Testis (tissue), 5 donors: ENCODE measurements at regions of chr14 and their contacts with region 1.

Region 1: GRCh38 chr14:61321385-61322010 is at the start of gene PRKCH:
- DNase-seq: peak; percentile 74
- H3K4me3 ChIP-seq: peak within 1 kb of the TSS; percentile 65
- H3K27ac ChIP-seq: peak within 1 kb of the TSS; percentile 13 to 75
- H3K4me1 ChIP-seq: peaks cover 4% of the 10 kb centered on the region
- H3K27me3 ChIP-seq: no peaks in the 10 kb centered on the region
- CTCF ChIP-seq: no peak
- POLR2A ChIP-seq: no peak
- total RNA-seq, gene PRKCH: 25.4 to 26.8 TPM

Region 2: DNA sequence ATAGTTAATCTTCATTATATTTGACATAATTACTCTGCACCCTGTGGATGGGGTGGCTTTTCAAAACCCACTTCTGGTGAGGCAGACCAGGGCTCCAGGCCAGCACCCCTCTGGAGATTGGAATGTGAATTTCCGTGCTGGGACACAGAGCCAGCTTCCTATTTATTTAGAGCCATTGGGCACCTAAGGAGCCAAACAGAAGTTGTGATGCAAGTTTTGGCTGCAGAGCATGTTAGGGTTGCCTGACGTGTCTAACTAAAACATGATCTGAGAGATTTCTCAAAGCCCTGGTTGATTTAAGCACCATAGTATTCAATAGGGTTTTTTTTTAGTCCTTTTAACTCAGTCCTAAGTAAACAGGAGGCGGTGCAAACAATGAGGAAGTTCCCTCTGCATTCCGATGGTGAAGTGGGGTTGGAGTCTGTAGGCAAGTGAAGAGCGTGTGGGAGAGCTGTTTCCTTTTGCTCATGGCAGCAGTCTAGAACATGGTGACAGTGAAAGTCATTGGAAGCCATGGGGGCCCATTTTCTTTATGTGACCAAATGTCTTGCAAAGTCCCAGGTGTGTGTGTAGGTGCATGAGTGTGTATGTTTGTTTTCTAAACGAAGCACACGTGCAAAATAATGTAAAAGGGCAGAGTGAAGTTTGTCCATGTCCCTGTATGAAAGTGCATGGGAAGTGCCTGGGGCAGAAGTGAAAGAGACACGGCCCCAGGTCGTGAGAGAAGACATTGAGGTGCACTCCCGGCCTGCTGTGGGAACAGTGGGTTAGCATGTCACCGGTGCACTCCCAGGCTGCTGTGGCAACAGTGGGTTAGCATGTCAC is 117.6 kb after region 1 on chr14:
- intact Hi-C with region 1: loop called (anchors 10 kb)
- DNase-seq: no peak
- H3K4me3 ChIP-seq: no peak overlapping the region
- H3K27ac ChIP-seq: no peak overlapping the region
- H3K4me1 ChIP-seq: no peaks in the 10 kb centered on the region
- H3K27me3 ChIP-seq: no peaks in the 10 kb centered on the region
- CTCF ChIP-seq: no peak
- POLR2A ChIP-seq: no peak